K562 (cell line): ENCODE measurements at regions of chr11 and their contacts with region 1.

Region 1: GRCh38 chr11:107549253-107549953 is 16.1 kb downstream of the ALKBH8 start:
- DNase-seq: peak; percentile 36 to 60 (median 38)
- ATAC-seq: peak; percentile 77
- H3K4me3 ChIP-seq: no peak overlapping the region
- H3K27ac ChIP-seq: no peak overlapping the region
- H3K4me1 ChIP-seq: no peaks in the 10 kb centered on the region
- H3K27me3 ChIP-seq: no peaks in the 10 kb centered on the region
- CTCF ChIP-seq: peak; percentile 56 to 85 (median 71); a peak in 5 of 6 replicates
- EP300 ChIP-seq: no peak
- POLR2A ChIP-seq: no peak
- RAD21 ChIP-seq: peak; percentile 80 to 83

Region 2: GRCh38 chr11:107252429-107253161 is 296.8 kb before region 1 on chr11:
- CTCF ChIA-PET with region 1: no interaction called
- POLR2A ChIA-PET with region 1: no interaction called
- in situ Hi-C with region 1: no loop called
- intact Hi-C with region 1: loop called (anchors 10 kb)
- DNase-seq: no peak
- ATAC-seq: peak; percentile 59
- H3K4me3 ChIP-seq: no peak overlapping the region
- H3K27ac ChIP-seq: no peak overlapping the region; the same call in 2 of the 3 replicates
- H3K4me1 ChIP-seq: peaks cover 0 to 11% of the 10 kb centered on the region in 2 experiments; a peak in 4 of 5 replicates
- H3K27me3 ChIP-seq: no peaks in the 10 kb centered on the region
- CTCF ChIP-seq: no peak
- EP300 ChIP-seq: no peak
- POLR2A ChIP-seq: peak; percentile 77
- RAD21 ChIP-seq: no peak

Region 3: GRCh38 chr11:107457558-107458271 is 91.7 kb before region 1 on chr11 and contains the start of gene CWF19L2:
- CTCF ChIA-PET with region 1: no interaction called
- POLR2A ChIA-PET with region 1: no interaction called
- in situ Hi-C with region 1: no loop called
- intact Hi-C with region 1: no loop called
- DNase-seq: peak; percentile 94 to 96 (median 95)
- ATAC-seq: peak; percentile 97
- H3K4me3 ChIP-seq: peak within 1 kb of the TSS; percentile 61
- H3K27ac ChIP-seq: peak within 1 kb of the TSS; percentile 76
- H3K4me1 ChIP-seq: peaks cover 0 to 5% of the 10 kb centered on the region in 2 experiments; a peak in 1 of 5 replicates
- H3K27me3 ChIP-seq: no peaks in the 10 kb centered on the region
- CTCF ChIP-seq: no peak
- EP300 ChIP-seq: no peak
- POLR2A ChIP-seq: peak; percentile 95
- RAD21 ChIP-seq: no peak
- polyA plus RNA-seq, gene CWF19L2: 4.7 to 7.0 TPM

Region 4: DNA sequence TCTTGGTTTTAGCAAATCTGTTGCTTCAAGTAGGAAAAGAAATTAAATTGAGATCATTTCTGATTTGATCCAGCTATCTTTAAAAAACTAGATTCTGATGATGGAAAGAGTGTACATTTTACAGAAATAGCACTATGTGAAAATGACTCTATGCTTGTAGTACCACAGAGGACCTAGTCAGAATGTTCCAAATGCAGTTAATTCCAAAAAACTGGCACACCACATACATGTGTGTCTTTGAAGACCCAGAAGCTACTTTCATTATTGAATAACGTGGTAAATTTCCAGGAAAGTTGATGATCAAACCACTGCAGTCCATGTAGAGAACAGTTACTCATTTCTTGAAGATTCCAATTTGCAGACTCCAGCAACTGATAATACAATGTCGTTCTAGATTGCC is 45.3 kb after region 1 on chr11:
- CTCF ChIA-PET with region 1: no interaction called
- POLR2A ChIA-PET with region 1: no interaction called
- in situ Hi-C with region 1: no loop called
- intact Hi-C with region 1: no loop called
- DNase-seq: no peak
- ATAC-seq: no peak
- H3K4me3 ChIP-seq: no peak overlapping the region
- H3K27ac ChIP-seq: no peak overlapping the region
- H3K4me1 ChIP-seq: peaks cover 0 to 14% of the 10 kb centered on the region in 2 experiments; a peak in 2 of 5 replicates
- H3K27me3 ChIP-seq: peaks cover 25 to 27% of the 10 kb centered on the region in 2 experiments; a peak in 4 of 5 replicates
- CTCF ChIP-seq: no peak
- EP300 ChIP-seq: no peak
- POLR2A ChIP-seq: no peak
- RAD21 ChIP-seq: no peak

Region 5: GRCh38 chr11:107605061-107606006 is 55.9 kb after region 1 on chr11:
- CTCF ChIA-PET with region 1: interaction called, 5 read pairs
- POLR2A ChIA-PET with region 1: no interaction called
- in situ Hi-C with region 1: no loop called
- intact Hi-C with region 1: loop called (anchors 2 kb)
- DNase-seq: peak in 1 of 4 experiments; percentile 10
- ATAC-seq: peak; percentile 71
- H3K4me3 ChIP-seq: no peak overlapping the region
- H3K27ac ChIP-seq: no peak overlapping the region
- H3K4me1 ChIP-seq: no peaks in the 10 kb centered on the region
- H3K27me3 ChIP-seq: no peaks in the 10 kb centered on the region; a peak in 2 of 5 replicates
- CTCF ChIP-seq: peak; percentile 17 to 28 (median 24); a peak in 3 of 6 replicates
- EP300 ChIP-seq: no peak
- POLR2A ChIP-seq: no peak
- RAD21 ChIP-seq: no peak

Region 6: GRCh38 chr11:107631931-107632330 is 82.5 kb after region 1 on chr11:
- CTCF ChIA-PET with region 1: no interaction called
- POLR2A ChIA-PET with region 1: no interaction called
- in situ Hi-C with region 1: no loop called
- intact Hi-C with region 1: no loop called
- DNase-seq: no peak
- ATAC-seq: no peak
- H3K4me3 ChIP-seq: no peak overlapping the region
- H3K27ac ChIP-seq: no peak overlapping the region
- H3K4me1 ChIP-seq: no peaks in the 10 kb centered on the region
- H3K27me3 ChIP-seq: peaks cover 2 to 4% of the 10 kb centered on the region in 2 experiments; a peak in 3 of 5 replicates
- CTCF ChIP-seq: no peak
- EP300 ChIP-seq: no peak
- POLR2A ChIP-seq: no peak
- RAD21 ChIP-seq: no peak

Region 7: GRCh38 chr11:107689317-107690202 is 140.2 kb after region 1 on chr11:
- CTCF ChIA-PET with region 1: interaction called, 8 read pairs
- POLR2A ChIA-PET with region 1: interaction called, 4 read pairs
- in situ Hi-C with region 1: loop called (anchors 10 kb)
- intact Hi-C with region 1: loop called (anchors 1 kb)
- DNase-seq: peak; percentile 33 to 78 (median 46)
- ATAC-seq: peak; percentile 94
- H3K4me3 ChIP-seq: no peak overlapping the region
- H3K27ac ChIP-seq: no peak overlapping the region
- H3K4me1 ChIP-seq: no peaks in the 10 kb centered on the region
- H3K27me3 ChIP-seq: no peaks in the 10 kb centered on the region
- CTCF ChIP-seq: peak; percentile 64 to 86 (median 79)
- EP300 ChIP-seq: no peak
- POLR2A ChIP-seq: no peak
- RAD21 ChIP-seq: peak; percentile 93 to 95

Region 8: DNA sequence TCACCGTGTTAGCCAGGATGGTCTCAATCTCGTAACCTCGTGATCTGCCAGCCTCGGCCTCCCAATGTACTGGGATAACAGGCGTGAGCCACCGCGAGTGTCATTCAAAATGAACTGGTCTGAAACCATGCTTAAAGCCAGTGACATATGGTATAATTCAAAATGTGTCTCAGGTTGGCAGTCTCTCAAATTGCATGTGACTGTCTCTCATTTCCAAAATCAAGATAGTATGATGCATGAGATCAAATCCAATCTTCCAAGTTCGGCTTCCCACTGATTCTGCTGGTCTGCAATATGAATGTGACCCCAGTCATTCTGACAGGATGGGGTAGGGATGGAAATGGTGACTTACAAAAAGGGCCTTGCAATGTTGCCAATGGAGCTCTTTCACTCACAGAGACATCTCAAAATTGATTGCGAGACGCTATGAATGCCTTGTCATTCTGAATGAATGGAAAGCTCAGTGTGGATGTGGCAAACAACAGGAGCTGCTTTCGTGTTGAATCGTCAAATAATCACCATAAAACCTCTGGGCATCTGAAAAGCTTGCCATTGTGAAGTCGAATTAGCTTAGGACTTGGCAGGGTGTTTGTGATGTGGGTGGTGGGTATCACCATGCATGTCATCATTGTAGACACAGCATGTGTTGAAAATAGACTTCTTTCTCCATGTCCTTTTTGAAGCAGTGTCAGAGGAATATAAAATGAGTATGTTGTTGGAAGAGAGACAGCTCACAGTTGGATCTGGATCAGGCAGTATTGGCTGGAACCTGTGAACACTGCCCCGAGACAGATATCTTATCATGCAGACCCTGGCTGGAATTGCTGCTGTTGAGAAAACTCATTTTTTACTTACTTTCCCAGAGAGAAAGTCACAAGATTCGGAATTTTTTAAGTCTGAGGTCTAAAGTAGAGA is 150.2 kb after region 1 on chr11:
- CTCF ChIA-PET with region 1: no interaction called
- POLR2A ChIA-PET with region 1: no interaction called
- in situ Hi-C with region 1: no loop called
- intact Hi-C with region 1: no loop called
- DNase-seq: no peak
- ATAC-seq: no peak
- H3K4me3 ChIP-seq: no peak overlapping the region
- H3K27ac ChIP-seq: no peak overlapping the region
- H3K4me1 ChIP-seq: no peaks in the 10 kb centered on the region; a peak in 1 of 5 replicates
- H3K27me3 ChIP-seq: peaks cover 9 to 10% of the 10 kb centered on the region in 2 experiments
- CTCF ChIP-seq: no peak
- EP300 ChIP-seq: no peak
- POLR2A ChIP-seq: no peak
- RAD21 ChIP-seq: no peak